ENCODE measurements at regions of chr5 and their contacts with region 1.

Region 1: GRCh38 chr5:105688227-105688792 is 1982.4 kb downstream of the EFNA5 start:
- DNase-seq: no peak
- ATAC-seq: no peak
- H3K4me3 ChIP-seq: no peak overlapping the region
- H3K27ac ChIP-seq: no peak overlapping the region
- H3K4me1 ChIP-seq: no peaks in the 10 kb centered on the region
- H3K27me3 ChIP-seq: no peaks in the 10 kb centered on the region
- CTCF ChIP-seq: no peak

Region 2: DNA sequence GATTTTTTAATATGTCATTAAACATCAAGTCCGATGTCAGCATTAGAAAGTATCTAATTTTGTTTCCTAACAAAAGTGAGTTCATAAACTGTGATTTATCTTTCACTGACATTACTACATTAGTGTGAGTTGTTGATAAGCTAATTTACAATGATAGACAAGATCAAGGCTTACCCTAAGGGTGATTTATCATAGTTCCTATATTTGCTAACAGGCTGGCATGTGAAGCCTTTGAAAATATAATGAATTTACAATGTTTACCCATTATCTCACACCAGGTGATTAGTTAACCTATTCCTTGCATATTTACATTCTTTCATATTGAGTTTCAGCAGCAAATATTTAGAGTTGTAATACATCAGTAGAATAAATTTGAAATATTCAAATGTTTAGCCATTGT is 1028.8 kb before region 1 on chr5:
- CTCF ChIA-PET with region 1: no interaction called
- POLR2A ChIA-PET with region 1: no interaction called
- intact Hi-C with region 1: no loop called
- DNase-seq: no peak
- ATAC-seq: no peak; the same call in 1 of the 2 replicates
- H3K4me3 ChIP-seq: no peak overlapping the region
- H3K27ac ChIP-seq: no peak overlapping the region
- H3K4me1 ChIP-seq: no peaks in the 10 kb centered on the region
- H3K27me3 ChIP-seq: no peaks in the 10 kb centered on the region
- CTCF ChIP-seq: no peak

Region 3: GRCh38 chr5:105259581-105260217 is 428.6 kb before region 1 on chr5:
- CTCF ChIA-PET with region 1: no interaction called
- POLR2A ChIA-PET with region 1: no interaction called
- intact Hi-C with region 1: no loop called
- DNase-seq: no peak
- ATAC-seq: no peak
- H3K4me3 ChIP-seq: no peak overlapping the region
- H3K27ac ChIP-seq: no peak overlapping the region
- H3K4me1 ChIP-seq: no peaks in the 10 kb centered on the region
- H3K27me3 ChIP-seq: no peaks in the 10 kb centered on the region
- CTCF ChIP-seq: no peak

Region 4: DNA sequence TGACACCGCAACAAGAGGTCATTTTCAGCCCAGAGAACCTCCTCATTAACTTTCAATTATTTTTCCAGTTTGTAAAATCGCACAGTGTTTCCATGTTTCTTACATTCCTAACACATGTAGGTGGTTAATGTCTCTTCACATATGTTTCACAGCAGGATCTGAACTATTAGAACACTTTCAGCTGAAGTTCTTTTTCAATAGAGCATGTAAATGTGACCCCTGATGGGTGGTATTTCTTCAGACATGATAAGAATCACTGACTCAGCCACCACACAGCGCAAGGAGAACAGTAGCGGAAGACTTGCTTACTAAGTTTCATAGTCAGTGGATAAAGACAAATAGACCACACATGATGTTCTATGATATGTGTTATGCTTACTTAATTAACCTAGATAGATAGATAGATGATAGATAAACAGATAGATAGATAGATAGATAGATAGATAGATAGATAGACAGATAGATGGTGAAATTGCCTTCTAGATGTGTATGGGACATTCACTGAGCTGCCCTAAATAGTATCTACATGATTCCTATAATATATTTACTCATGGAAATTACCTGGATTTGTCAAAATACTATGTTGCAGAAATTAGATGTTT is 133.6 kb before region 1 on chr5:
- CTCF ChIA-PET with region 1: no interaction called
- POLR2A ChIA-PET with region 1: interaction called, 10 read pairs
- intact Hi-C with region 1: no loop called
- DNase-seq: no peak
- ATAC-seq: no peak
- H3K4me3 ChIP-seq: no peak overlapping the region
- H3K27ac ChIP-seq: no peak overlapping the region
- H3K4me1 ChIP-seq: no peaks in the 10 kb centered on the region
- H3K27me3 ChIP-seq: no peaks in the 10 kb centered on the region
- CTCF ChIP-seq: no peak